CD4-positive, alpha-beta memory T cell (primary cell): ENCODE measurements at regions of chr2 and their contacts with region 1.

Region 1: GRCh38 chr2:9613291-9613690 is 17.5 kb downstream of the YWHAQ start:
- DNase-seq: no peak
- H3K4me3 ChIP-seq: no peak overlapping the region
- H3K4me3 Mint-ChIP-seq: peak overlapping the region in 1 of 8 donors; percentile 39
- H3K27ac ChIP-seq: no peak overlapping the region
- H3K27ac Mint-ChIP-seq: peak overlapping the region in 3 of 7 donors; percentile 14 to 63 (median 22)
- H3K4me1 ChIP-seq: peaks cover 85% of the 10 kb centered on the region
- H3K4me1 Mint-ChIP-seq: peaks cover 71 to 98% (median 86%) of the 10 kb centered on the region in 4 donors
- H3K27me3 ChIP-seq: no peaks in the 10 kb centered on the region
- H3K27me3 Mint-ChIP-seq: no peaks in the 10 kb centered on the region

Region 2: GRCh38 chr2:9594366-9595054 is 18.8 kb before region 1 on chr2:
- CTCF ChIA-PET with region 1: interaction called, 4 read pairs
- POLR2A ChIA-PET with region 1: interaction called, 11 read pairs
- intact Hi-C with region 1: no loop called
- DNase-seq: no peak
- H3K4me3 ChIP-seq: no peak overlapping the region
- H3K4me3 Mint-ChIP-seq: peak overlapping the region in 6 of 8 donors; percentile 1 to 35 (median 16)
- H3K27ac ChIP-seq: peak overlapping the region; percentile 5
- H3K27ac Mint-ChIP-seq: peak overlapping the region; percentile 2 to 80 (median 52)
- H3K4me1 ChIP-seq: peaks cover 50% of the 10 kb centered on the region
- H3K4me1 Mint-ChIP-seq: peaks cover 38 to 68% (median 54%) of the 10 kb centered on the region in 4 donors
- H3K27me3 ChIP-seq: no peaks in the 10 kb centered on the region
- H3K27me3 Mint-ChIP-seq: no peaks in the 10 kb centered on the region

Region 3: DNA sequence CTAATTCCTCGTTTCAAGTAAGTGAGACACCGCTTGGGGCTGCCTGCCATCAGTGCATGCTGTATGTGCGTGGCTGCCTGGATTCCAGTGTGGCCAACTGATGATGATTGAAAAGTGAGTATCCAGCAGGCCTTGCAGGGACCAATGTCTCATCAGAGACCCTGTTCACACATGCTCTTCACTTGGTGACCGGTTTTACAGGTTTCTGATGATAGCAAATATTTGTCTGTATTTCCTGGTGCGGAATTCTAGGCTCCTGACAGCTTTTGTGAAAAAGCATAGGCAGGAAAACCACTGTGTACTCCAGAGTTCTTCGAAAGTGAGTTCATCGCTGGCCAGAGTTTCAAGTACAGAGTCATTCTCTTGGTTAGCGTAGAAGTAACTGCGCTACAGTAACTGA is 31.3 kb after region 1 on chr2:
- CTCF ChIA-PET with region 1: no interaction called
- POLR2A ChIA-PET with region 1: no interaction called
- intact Hi-C with region 1: no loop called
- DNase-seq: no peak
- H3K4me3 ChIP-seq: no peak overlapping the region
- H3K4me3 Mint-ChIP-seq: no peak overlapping the region
- H3K27ac ChIP-seq: no peak overlapping the region
- H3K27ac Mint-ChIP-seq: no peak overlapping the region
- H3K4me1 ChIP-seq: peaks cover 16% of the 10 kb centered on the region
- H3K4me1 Mint-ChIP-seq: peaks cover 10 to 30% (median 21%) of the 10 kb centered on the region in 4 donors
- H3K27me3 ChIP-seq: no peaks in the 10 kb centered on the region
- H3K27me3 Mint-ChIP-seq: no peaks in the 10 kb centered on the region